ENCODE measurements at regions of chr19 and their contacts with region 1.

Region 1: GRCh38 chr19:10269333-10270179 is 1.4 kb upstream of the ICAM1 start:
- DNase-seq: peak; percentile 80 to 91 (median 86)
- ATAC-seq: peak; percentile 80
- H3K4me3 ChIP-seq: peak overlapping the region; percentile 48
- H3K27ac ChIP-seq: peak overlapping the region; percentile 81
- H3K4me1 ChIP-seq: peaks cover 16 to 33% of the 10 kb centered on the region in 2 experiments; a peak in 4 of 5 replicates
- H3K27me3 ChIP-seq: no peaks in the 10 kb centered on the region
- CTCF ChIP-seq: peak; percentile 94 to 98 (median 95)
- EP300 ChIP-seq: no peak
- POLR2A ChIP-seq: no peak
- RAD21 ChIP-seq: peak; percentile 98 to 99

Region 2: GRCh38 chr19:10219678-10220077 is 49.9 kb before region 1 on chr19:
- CTCF ChIA-PET with region 1: no interaction called
- POLR2A ChIA-PET with region 1: no interaction called
- in situ Hi-C with region 1: no loop called
- intact Hi-C with region 1: no loop called
- DNase-seq: peak; percentile 44 to 65 (median 50)
- ATAC-seq: peak; percentile 81
- H3K4me3 ChIP-seq: no peak overlapping the region
- H3K27ac ChIP-seq: no peak overlapping the region
- H3K4me1 ChIP-seq: peaks cover 3 to 14% of the 10 kb centered on the region in 2 experiments; a peak in 3 of 5 replicates
- H3K27me3 ChIP-seq: no peaks in the 10 kb centered on the region
- CTCF ChIP-seq: peak; percentile 47 to 65 (median 64)
- EP300 ChIP-seq: no peak
- POLR2A ChIP-seq: no peak
- RAD21 ChIP-seq: peak in 1 of 2 experiments; percentile 45; a peak in 2 of 4 replicates

Region 3: DNA sequence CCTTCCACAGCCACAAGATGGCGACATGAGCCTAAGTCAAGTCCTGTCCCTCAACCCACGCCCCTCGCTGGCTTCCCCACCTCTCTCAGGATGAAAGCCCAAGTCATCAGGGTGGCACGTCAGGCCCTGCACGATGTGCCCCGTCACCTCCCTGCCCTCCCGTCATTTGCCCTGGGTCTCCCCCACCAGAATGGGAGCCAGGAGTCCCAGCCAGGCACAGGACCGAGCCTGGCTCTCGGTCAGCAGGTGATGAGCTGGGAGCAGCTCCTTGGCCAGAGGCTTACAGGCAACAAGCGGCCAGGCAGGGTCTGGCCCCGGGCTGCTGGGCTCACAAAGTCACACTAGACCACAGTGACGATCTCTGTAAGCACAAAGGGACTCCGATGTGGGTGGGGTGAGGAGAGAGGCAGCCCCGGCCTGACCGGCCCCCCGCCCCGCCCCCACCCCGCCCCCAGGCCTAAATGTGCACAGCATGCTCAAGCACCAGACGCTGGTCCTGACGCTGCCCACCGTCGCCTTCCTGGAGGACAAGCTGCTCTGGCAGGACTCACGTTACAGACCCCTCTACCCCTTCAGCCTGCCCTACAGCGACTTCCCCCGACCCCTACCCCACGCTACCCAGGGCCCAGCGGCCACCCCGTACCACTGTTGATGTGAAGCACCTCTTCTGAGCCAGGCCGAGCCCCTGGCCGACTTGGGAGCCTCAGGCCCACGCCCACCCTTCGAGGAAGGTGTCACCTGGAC is 10.2 kb before region 1 on chr19:
- CTCF ChIA-PET with region 1: no interaction called
- POLR2A ChIA-PET with region 1: interaction called, 23 read pairs
- in situ Hi-C with region 1: no loop called
- intact Hi-C with region 1: no loop called
- DNase-seq: peak; percentile 60 to 94 (median 67)
- ATAC-seq: peak; percentile 90
- H3K4me3 ChIP-seq: no peak overlapping the region
- H3K27ac ChIP-seq: no peak overlapping the region
- H3K4me1 ChIP-seq: peaks cover 5 to 34% of the 10 kb centered on the region in 2 experiments; a peak in 3 of 5 replicates
- H3K27me3 ChIP-seq: no peaks in the 10 kb centered on the region
- CTCF ChIP-seq: peak; percentile 78 to 87 (median 85)
- EP300 ChIP-seq: no peak
- POLR2A ChIP-seq: peak; percentile 40; the same call in 1 of the 2 replicates
- RAD21 ChIP-seq: peak; percentile 50 to 63

Region 4: GRCh38 chr19:10279737-10280442 is 10.3 kb after region 1 on chr19:
- CTCF ChIA-PET with region 1: no interaction called
- POLR2A ChIA-PET with region 1: interaction called, 74 read pairs
- in situ Hi-C with region 1: no loop called
- intact Hi-C with region 1: no loop called
- DNase-seq: no peak
- ATAC-seq: no peak
- H3K4me3 ChIP-seq: no peak overlapping the region
- H3K27ac ChIP-seq: no peak overlapping the region
- H3K4me1 ChIP-seq: peaks cover 11 to 21% of the 10 kb centered on the region in 2 experiments; a peak in 4 of 5 replicates
- H3K27me3 ChIP-seq: no peaks in the 10 kb centered on the region
- CTCF ChIP-seq: no peak
- EP300 ChIP-seq: no peak
- POLR2A ChIP-seq: no peak
- RAD21 ChIP-seq: no peak

Region 5: DNA sequence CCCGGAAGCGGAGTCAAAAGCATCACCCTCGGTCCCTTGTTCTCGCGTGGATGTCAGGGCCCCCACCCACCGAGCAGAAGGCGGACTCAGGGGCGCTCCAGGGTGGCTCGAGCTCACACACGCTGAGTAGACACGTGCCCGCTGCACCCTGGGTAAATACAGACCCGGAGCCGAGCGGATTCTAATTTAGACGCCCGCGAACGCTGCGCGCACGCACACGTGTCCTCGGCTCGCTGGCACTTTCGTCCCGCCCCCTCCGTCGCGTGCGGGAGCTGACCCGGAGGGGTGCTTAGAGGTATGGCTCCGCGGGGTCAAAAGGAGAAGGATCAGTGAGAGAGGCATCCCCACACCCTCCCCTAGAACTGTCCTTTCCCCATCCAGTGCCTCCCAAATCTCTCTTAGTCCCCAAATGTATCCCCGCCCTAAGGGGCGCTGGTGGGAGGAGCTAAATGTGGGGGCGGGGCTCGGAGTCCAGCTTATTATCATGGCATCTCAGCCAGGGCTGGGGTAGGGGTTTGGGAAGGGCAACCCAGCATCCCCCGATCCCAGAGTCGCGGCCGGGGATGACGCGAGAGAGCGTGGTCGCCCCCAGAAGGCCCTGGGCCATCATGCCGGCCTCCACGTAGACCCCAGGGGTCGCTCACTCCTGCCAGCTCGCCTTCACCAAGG is 19.7 kb after region 1 on chr19:
- CTCF ChIA-PET with region 1: interaction called, 3 read pairs
- POLR2A ChIA-PET with region 1: interaction called, 74 read pairs
- in situ Hi-C with region 1: no loop called
- intact Hi-C with region 1: loop called (anchors 1 kb)
- DNase-seq: peak; percentile 66 to 94 (median 74)
- ATAC-seq: peak; percentile 12
- H3K4me3 ChIP-seq: peak overlapping the region; percentile 79
- H3K27ac ChIP-seq: peak overlapping the region; percentile 96
- H3K4me1 ChIP-seq: peaks cover 29 to 92% of the 10 kb centered on the region in 2 experiments; a peak in 4 of 5 replicates
- H3K27me3 ChIP-seq: no peaks in the 10 kb centered on the region
- CTCF ChIP-seq: peak in 1 of 3 experiments; percentile 32; a peak in 2 of 6 replicates
- EP300 ChIP-seq: no peak; the same call in 1 of the 2 replicates
- POLR2A ChIP-seq: peak; percentile 73
- RAD21 ChIP-seq: peak in 1 of 2 experiments; percentile 21; a peak in 2 of 4 replicates

Region 6: DNA sequence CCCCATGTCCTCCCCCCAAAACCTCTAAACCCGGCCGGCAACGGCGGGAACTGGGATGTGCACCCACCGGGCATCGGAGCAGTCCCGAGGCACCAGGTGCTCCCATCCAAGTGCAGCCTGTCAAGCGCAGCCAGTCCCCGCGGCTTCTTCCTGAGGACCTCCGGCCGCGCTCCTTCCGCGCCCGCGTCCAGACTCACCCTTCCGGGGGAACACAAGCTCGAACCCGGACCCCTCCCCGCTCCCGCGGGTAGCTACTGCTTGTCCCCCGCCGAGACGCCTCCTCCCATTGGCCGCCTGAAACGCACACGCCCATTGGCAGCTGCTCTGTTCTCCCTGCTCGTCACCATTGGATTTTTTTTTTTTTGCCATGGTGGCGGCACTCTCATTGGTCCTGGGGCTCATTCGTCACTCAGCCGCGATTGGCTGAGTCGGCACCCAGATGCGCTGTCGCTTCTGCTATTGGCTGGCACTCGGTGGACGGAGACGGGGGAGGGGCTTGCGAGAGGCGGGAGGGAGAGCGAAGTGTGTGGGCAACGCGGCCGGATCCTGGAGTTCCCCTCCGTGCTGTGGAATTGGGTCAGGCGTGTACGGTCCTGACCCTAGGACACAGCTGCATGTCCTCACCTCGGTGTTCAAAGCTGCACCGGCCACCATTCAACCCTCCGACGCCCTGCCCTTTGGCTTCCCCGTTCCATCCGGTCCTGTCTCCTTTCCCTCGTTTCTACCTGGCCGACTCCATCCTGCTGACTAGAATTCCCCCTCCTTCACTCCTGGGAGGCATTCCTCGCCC is 111.0 kb after region 1 on chr19 and contains the start of gene TYK2:
- CTCF ChIA-PET with region 1: no interaction called
- POLR2A ChIA-PET with region 1: interaction called, 11 read pairs
- in situ Hi-C with region 1: loop called (anchors 5 kb)
- intact Hi-C with region 1: loop called (anchors 2 kb)
- DNase-seq: peak; percentile 99 to 100 (median 100)
- ATAC-seq: peak; percentile 98
- H3K4me3 ChIP-seq: peak within 1 kb of the TSS; percentile 91
- H3K27ac ChIP-seq: peak within 1 kb of the TSS; percentile 96
- H3K4me1 ChIP-seq: peaks cover 8 to 18% of the 10 kb centered on the region in 2 experiments; a peak in 4 of 5 replicates
- H3K27me3 ChIP-seq: no peaks in the 10 kb centered on the region
- CTCF ChIP-seq: no peak
- EP300 ChIP-seq: no peak
- POLR2A ChIP-seq: peak; percentile 98
- RAD21 ChIP-seq: no peak; a peak in 1 of 4 replicates
- polyA plus RNA-seq, gene TYK2: 15.0 to 19.9 TPM

Region 7: DNA sequence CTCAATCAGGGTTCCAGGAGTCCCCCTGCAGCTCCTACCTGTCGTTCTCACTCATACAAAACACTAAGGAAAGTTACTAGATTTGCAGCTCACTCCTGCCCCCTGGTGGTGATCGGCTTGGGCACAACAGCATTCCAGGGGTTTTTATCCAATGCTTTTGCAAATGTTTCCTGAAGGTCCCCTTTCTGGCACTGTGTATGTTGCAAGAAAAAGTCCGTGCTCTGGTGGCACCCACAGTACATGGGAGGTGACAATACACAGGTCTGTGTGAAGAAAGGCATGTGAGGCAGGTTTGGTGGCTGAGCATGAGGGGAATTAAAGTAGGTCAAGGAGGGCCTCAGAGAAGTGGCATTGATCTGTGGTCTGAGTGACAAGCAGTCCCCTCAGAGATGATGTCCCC is 119.4 kb after region 1 on chr19:
- CTCF ChIA-PET with region 1: interaction called, 77 read pairs
- POLR2A ChIA-PET with region 1: interaction called, 32 read pairs
- in situ Hi-C with region 1: loop called (anchors 5 kb)
- intact Hi-C with region 1: loop called (anchors 1 kb)
- DNase-seq: peak; percentile 57 to 91 (median 68)
- ATAC-seq: peak; percentile 84
- H3K4me3 ChIP-seq: no peak overlapping the region
- H3K27ac ChIP-seq: no peak overlapping the region
- H3K4me1 ChIP-seq: peaks cover 0 to 6% of the 10 kb centered on the region in 2 experiments; a peak in 2 of 5 replicates
- H3K27me3 ChIP-seq: no peaks in the 10 kb centered on the region
- CTCF ChIP-seq: peak; percentile 92 to 95 (median 94)
- EP300 ChIP-seq: no peak
- POLR2A ChIP-seq: peak; percentile 56
- RAD21 ChIP-seq: peak; percentile 92 to 96

Region 8: DNA sequence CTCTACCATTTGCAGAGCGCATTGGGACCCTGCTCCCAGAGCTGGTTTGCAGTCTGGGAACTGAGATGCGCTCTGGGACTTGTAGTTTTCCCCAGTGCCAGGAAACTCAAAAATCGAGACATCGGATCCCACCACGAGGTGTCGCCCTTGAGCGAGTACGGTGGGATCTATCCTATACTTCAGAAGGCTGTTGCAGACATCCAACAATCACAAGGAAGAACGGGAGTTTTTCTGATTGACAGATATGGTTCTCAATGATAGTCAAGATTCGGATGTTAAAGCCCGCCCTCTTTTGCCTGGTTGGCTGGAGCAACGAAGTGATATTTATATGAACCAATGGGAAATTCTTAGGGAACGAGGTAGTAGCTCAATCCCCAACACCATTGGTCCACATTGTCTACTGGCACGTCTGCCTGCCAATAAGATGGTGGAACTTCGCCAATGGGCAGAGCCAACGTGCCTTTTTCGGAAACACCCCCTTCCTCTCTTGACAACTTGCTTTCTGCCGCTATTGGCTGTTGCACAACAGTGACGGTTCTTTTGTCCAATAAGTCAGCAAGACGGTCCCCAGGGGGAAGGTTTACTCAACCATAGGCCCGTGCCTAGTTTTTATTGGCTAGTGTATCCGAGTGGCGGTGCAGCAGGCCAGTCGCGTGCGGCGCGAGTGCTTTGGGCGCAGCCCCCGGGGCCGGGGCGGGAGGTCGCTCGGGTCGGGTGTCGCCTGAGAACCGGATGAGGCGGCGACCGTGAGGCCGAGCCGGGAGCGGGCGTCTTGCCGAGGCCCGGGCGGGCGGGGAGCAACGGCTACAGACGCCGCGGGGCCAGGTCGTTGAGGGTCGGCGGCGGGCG is 448.0 kb after region 1 on chr19 and contains the start of gene DNM2:
- CTCF ChIA-PET with region 1: no interaction called
- POLR2A ChIA-PET with region 1: no interaction called
- in situ Hi-C with region 1: no loop called
- intact Hi-C with region 1: no loop called
- DNase-seq: peak; percentile 94 to 100 (median 97)
- ATAC-seq: peak; percentile 95
- H3K4me3 ChIP-seq: peak within 1 kb of the TSS; percentile 99
- H3K27ac ChIP-seq: peak within 1 kb of the TSS; percentile 95
- H3K4me1 ChIP-seq: peaks cover 18 to 48% of the 10 kb centered on the region in 2 experiments; a peak in 4 of 5 replicates
- H3K27me3 ChIP-seq: no peaks in the 10 kb centered on the region
- CTCF ChIP-seq: peak; percentile 84 to 94 (median 94)
- EP300 ChIP-seq: peak; percentile 39
- POLR2A ChIP-seq: no peak; the same call in 1 of the 2 replicates
- RAD21 ChIP-seq: peak; percentile 91 to 94
- polyA plus RNA-seq, gene DNM2: 2.2 to 2.4 TPM